Activated T-helper 1 cell treated with anti-CD3 and anti-CD28 coated beads, Interleukin-12 subunit alpha, Interleukin-12 subunit beta, Interleukin-2, Interleukin-4 antibody, amounts not matched to agents 30 ng/mL and 10 ng/mL and 1 ng/mL, durations not matched to agents 14 hours and 24 hours and 36 hours (primary cell): ENCODE measurements at regions of chr6 and their contacts with region 1.

Region 1: GRCh38 chr6:5517796-5518195 is 256.5 kb downstream of the FARS2 start:
- DNase-seq: peak; percentile 14
- H3K4me3 Mint-ChIP-seq: peak overlapping the region; percentile 23
- H3K27ac Mint-ChIP-seq: peak overlapping the region; percentile 72
- H3K4me1 Mint-ChIP-seq: peaks cover 39% of the 10 kb centered on the region
- H3K27me3 Mint-ChIP-seq: no peaks in the 10 kb centered on the region

Region 2: DNA sequence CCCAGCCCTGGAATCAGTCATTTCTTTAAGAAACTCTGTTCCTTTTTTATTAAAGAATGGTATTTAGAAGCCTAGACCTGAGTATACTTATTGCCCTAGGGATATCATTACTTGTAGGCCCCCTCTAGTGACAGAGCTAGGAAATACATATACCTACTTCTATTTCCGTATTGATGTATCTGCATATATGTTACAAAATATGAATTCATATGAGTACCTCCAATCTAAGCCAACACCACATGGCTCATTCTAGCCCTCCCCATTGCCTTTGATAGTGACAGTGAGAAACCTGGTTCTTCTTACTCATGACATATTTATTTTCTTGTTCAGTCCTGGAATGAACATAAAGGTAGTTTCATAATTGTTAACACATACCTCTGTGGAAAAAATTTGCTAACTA is 119.3 kb before region 1 on chr6:
- intact Hi-C with region 1: loop called (anchors 5 kb)
- DNase-seq: no peak
- H3K4me3 Mint-ChIP-seq: no peak overlapping the region
- H3K27ac Mint-ChIP-seq: no peak overlapping the region
- H3K4me1 Mint-ChIP-seq: no peaks in the 10 kb centered on the region
- H3K27me3 Mint-ChIP-seq: no peaks in the 10 kb centered on the region

Region 3: DNA sequence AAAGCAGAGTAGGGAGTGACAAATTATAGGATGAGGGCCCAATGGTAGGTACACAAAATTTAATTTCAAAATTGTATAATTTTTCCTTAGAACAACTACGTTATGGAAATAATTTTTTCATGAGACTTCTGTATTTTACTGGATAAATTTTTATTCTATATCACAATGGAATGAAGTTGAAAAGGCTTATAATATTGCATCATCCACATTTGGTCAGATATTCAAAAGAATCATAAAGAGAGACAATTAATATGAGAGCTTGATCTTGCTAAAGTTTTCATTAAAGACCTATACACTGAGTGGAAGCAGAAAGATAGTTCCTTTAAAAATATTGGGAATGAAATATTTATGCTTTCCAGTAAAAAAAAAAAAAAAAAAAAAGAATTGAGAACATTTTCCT is 13.7 kb before region 1 on chr6:
- intact Hi-C with region 1: loop called (anchors 2 kb)
- DNase-seq: no peak
- H3K4me3 Mint-ChIP-seq: no peak overlapping the region
- H3K27ac Mint-ChIP-seq: no peak overlapping the region
- H3K4me1 Mint-ChIP-seq: peaks cover 24% of the 10 kb centered on the region
- H3K27me3 Mint-ChIP-seq: no peaks in the 10 kb centered on the region

Region 4: DNA sequence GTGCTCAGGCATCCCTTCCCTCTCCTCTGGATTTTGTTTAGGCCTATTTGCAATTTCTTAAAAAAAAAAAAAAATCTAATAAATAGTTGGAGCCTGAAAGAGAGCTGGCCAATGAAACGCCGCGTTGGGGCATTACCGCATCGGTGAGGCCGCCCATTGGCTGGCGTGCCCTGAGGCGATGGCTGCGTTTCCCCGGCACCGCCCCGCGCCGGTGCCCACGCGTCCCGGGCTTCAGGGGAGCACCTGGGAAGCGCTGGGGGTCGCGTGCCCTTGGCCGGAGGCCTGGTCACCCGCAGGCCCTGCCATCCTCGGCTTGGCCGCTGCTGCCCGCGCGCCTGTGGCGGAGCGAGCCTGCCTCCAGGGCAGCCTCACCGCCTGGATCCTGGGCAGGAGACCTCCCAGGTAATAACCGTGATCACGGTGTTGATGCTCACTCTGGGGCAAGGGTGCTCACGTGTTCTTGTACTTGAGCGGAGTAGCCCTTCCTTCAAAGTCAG is 333.5 kb after region 1 on chr6:
- intact Hi-C with region 1: loop called (anchors 5 kb)
- DNase-seq: peak; percentile 62
- H3K4me3 Mint-ChIP-seq: peak overlapping the region; percentile 78
- H3K27ac Mint-ChIP-seq: no peak overlapping the region
- H3K4me1 Mint-ChIP-seq: peaks cover 18% of the 10 kb centered on the region
- H3K27me3 Mint-ChIP-seq: peaks cover 12% of the 10 kb centered on the region

Region 5: DNA sequence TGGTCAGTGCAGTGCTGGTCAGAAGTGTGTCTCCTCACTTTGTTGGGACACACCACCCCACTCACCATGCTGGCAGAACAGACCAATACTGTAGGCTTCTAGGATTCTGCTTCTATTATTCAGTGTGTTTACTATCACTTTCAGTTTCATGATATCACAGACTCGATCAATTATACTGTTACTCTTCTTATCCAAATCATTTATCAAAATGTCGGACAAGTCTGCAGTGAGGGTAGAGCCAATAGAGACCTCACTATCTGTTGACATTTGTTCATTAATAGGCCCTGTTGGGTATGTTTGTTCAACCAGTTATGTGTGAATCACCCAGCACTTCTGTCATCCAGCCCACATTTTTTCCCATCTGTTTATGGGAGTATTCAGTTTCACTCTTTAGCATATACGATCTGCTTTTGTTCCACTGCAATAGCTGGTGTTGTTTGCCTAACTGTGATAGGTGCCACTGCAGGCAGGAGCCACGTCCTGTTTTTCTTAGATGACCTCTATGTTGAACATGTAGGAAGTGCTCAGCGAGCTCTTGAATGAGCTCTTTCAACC is 348.8 kb after region 1 on chr6:
- intact Hi-C with region 1: loop called (anchors 2 kb)
- DNase-seq: no peak
- H3K4me3 Mint-ChIP-seq: peak overlapping the region; percentile 69
- H3K27ac Mint-ChIP-seq: peak overlapping the region; percentile 88
- H3K4me1 Mint-ChIP-seq: peaks cover 39% of the 10 kb centered on the region
- H3K27me3 Mint-ChIP-seq: no peaks in the 10 kb centered on the region

Region 6: DNA sequence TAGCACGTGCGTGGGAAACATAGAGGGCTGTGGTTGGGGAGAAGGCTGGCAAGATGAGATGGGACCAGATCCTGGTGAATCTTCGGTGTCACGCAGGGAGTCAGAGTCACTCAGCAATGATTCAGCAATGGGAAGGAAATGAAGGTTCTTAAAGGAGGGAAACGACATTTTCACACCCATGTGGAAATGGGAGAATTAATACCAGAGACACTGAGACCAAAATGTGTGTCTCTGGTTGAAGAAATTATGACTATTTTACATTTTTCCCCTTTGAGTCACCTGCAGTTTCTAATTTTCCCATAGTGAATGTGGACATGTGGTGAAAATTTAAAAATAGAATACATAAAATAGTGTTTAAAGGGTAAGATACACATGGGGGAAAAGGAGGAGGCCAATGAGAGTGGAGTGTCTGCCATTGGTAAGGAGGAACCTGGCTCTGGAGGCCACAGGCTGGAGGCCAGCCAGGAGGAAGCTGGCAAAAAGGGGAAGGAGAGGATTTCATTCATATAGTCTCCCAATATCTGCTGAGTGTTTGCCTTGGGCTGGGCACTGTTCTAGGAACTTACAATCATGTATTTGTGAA is 471.4 kb after region 1 on chr6:
- intact Hi-C with region 1: loop called (anchors 5 kb)
- DNase-seq: no peak
- H3K4me3 Mint-ChIP-seq: no peak overlapping the region
- H3K27ac Mint-ChIP-seq: no peak overlapping the region
- H3K4me1 Mint-ChIP-seq: peaks cover 41% of the 10 kb centered on the region
- H3K27me3 Mint-ChIP-seq: peaks cover 48% of the 10 kb centered on the region

Region 7: DNA sequence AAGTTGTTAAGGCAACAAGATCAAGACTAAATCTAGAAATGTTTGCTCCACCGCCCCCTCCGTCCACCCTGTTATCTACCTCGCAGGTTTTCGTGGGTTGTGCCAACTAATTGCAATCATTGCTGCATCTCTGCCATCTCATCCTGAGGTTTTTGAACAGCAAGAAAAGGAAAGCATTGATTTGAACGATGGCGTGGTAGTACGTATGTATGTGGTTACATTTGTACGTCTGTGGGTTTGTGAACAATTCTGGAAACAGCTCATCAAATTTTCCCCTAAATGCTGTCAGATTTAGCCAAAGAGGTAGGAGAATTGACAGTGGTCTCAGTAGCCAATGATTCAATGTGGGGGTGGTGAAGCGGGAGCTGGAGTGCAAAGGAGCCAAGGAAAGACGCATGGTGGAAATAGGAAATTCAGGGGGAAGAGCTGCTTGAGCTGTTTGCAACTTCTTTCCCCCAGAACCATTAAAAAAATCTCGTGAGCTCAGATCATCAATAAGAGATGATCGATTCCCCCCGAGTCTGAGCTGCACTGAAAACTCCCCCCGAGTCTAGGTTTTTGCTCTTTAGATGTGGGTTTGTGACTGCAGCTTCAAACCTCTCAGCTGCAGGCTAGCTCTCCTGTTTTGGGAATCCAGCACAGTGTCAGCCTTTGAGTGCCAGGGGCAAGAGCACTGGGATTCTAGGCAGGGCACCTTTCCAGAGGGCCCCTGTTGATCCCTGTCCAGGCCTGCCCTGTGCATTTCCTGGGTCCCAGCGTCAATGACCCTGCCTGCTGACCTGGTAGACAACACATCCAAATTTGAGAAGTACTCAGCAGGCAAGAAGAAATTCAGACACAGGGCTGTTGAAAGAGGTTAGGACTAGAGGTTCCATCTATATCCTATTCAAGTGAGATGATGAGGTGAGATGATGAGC is 998.2 kb after region 1 on chr6:
- intact Hi-C with region 1: loop called (anchors 5 kb)
- DNase-seq: peak; percentile 38
- H3K4me3 Mint-ChIP-seq: no peak overlapping the region
- H3K27ac Mint-ChIP-seq: peak overlapping the region; percentile 21
- H3K4me1 Mint-ChIP-seq: peaks cover 18% of the 10 kb centered on the region
- H3K27me3 Mint-ChIP-seq: peaks cover 80% of the 10 kb centered on the region